ENCODE measurements at regions of chr20 and their contacts with region 1.

Region 1: DNA sequence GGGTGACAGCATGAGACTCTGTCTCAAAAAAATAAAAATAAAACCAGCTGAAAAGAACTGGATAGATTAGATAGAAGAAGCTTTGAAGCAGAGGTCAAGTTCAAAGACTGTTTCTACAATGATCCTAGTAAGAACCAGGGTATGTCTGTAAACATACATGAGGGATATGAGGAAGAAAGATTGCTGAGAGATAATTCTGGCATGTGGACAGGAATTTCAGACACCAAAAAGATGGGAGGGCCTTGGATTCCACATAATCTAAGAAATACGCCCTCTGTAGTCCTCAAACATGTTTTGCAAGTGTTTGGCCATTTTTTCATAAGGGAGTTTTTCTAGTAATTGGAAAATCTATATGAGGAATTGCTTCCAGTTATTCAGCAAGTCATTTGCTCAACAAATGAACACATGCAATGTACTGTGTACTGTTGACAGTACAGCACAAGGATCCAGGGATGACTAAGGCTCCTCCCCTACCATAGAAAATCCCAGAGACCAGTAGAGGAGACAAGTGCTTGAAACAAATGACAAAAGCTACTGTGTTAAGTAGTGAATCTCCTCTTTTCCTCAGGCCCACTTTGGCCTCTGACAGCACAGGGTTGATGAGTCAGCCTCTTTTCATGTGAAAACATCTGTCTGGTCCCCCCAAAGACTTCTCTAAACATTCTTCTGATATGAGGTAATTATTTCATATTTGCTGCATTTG is 795.9 kb downstream of the MAFB start:
- DNase-seq: no peak
- ATAC-seq: peak in 3 of 4 donors; percentile 31 to 48 (median 43)
- H3K4me3 ChIP-seq: no peak overlapping the region
- H3K27ac ChIP-seq: peak overlapping the region in 1 of 3 donors; percentile 14
- H3K4me1 ChIP-seq: peaks cover 0 to 34% (median 3%) of the 10 kb centered on the region in 4 donors
- H3K27me3 ChIP-seq: no peaks in the 10 kb centered on the region
- CTCF ChIP-seq: peak in 1 of 4 donors; percentile 15
- POLR2A ChIP-seq: no peak

Region 2: GRCh38 chr20:39986173-39986904 is 93.2 kb after region 1 on chr20:
- intact Hi-C with region 1: loop called (anchors 10 kb)
- DNase-seq: peak; percentile 51 to 75 (median 72)
- ATAC-seq: peak; percentile 78 to 85 (median 82)
- H3K4me3 ChIP-seq: no peak overlapping the region
- H3K27ac ChIP-seq: peak overlapping the region; percentile 74 to 94 (median 84)
- H3K4me1 ChIP-seq: peaks cover 0 to 53% (median 7%) of the 10 kb centered on the region in 4 donors
- H3K27me3 ChIP-seq: no peaks in the 10 kb centered on the region
- CTCF ChIP-seq: no peak
- POLR2A ChIP-seq: peak; percentile 64